HEK293T (cell line): ENCODE measurements at regions of chr5 and their contacts with region 1.

Region 1: GRCh38 chr5:112860929-112861637 is at the start of gene SRP19:
- DNase-seq: peak; percentile 96

Region 2: DNA sequence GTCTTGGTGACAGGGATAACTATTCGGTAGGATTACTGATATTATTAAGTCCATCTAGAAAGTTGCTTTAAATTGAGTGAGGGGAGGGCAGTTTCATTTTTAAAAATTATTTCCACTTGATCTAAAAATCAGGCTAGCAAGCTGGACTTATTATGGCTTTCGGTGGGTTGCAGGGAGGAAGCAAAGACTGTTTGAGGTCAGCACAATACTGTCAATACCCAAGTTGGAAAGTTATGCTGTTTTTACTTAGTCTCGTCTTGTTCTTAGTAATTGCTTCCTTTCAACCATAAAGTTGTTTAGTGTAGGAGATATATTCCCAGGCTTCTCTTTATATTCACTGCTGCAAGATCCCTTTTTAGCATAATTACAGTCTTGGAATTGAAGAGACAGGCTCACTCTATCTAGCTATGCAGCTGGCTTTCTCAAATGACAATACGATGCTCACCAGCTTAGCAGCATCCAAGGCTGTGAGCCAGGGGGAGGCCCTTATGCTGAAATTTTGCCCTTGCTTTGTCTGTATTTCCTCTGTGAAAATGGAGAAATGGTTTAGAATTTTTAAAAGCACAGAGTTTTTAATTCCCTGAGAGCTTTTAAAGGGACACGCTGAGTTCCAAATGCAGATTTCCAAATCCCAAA is 191.6 kb before region 1 on chr5:
- CTCF ChIA-PET with region 1: no interaction called
- POLR2A ChIA-PET with region 1: no interaction called
- DNase-seq: no peak

Region 3: GRCh38 chr5:112848116-112848811 is 12.8 kb before region 1 on chr5:
- CTCF ChIA-PET with region 1: interaction called, 14 read pairs
- POLR2A ChIA-PET with region 1: interaction called, 11 read pairs
- DNase-seq: peak; percentile 61

Region 4: DNA sequence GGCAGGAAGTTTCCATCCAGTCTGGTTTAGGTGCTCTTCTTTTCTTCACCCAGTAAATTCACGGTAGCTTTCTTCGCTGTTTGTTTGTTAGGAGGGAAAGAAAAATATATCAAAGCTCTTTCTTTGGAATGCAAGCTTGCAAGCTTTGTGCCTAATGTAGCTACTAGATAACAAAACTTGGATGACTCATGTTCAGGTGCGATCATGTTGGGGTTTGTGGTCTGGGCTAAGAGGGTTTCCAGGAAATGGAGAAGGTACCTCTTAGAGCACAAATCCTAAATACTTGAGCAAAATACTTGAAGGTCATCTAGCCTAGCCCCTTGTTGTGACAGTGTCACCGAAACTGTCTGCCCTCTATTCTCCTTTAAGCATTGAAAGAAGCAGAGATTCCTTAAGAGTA is 17.7 kb after region 1 on chr5:
- CTCF ChIA-PET with region 1: no interaction called
- POLR2A ChIA-PET with region 1: interaction called, 11 read pairs
- DNase-seq: no peak

Region 5: DNA sequence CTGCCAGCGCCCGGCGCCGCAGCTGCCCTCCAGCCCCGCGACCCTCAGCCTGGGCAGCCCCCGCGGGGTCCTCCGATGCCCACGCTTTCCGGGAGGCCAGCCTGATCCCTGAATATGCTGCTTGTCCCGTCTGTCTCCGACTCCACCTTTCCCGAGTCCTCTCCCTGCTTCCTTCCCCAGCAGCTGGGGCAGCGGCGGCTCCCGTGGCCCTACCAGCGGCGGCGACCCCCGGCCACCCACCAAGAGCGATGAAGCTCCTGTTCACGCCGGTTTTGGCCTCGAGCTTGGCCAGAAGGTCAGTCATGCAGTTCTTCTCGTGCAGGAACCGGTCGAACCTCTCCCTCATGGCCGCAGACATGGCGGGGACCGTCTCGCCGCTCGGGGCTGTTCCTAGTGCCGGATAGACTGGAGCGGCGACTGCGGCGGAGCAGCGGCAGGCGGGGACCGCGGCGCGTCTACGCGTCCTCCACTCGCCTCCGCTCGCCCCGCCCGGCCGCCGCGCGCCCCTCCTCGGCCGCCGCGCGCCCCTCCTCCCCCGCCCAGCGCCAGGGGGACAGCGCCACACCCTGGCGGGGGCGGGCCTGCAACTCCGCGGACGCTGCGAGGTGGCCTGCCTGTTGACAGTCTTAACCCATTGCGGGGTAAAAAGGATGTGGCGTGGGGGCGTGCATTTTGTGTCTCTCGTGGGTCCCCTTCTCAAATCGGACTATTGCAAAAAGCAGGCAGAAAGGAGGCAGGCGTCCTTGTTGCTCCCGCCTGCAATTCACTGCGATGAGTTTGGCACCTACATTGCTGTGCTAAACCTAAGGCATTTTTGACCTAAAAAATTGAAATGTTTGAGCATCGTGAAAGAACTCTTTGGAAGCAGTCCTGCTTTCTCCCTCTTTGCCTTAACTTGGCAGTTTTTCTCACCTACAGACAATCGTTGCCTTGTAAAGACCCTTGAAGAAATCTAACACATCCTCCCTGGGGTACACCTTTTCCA is 61.0 kb after region 1 on chr5 and contains the start of gene REEP5:
- CTCF ChIA-PET with region 1: no interaction called
- POLR2A ChIA-PET with region 1: interaction called, 24 read pairs
- DNase-seq: peak; percentile 92

Region 6: DNA sequence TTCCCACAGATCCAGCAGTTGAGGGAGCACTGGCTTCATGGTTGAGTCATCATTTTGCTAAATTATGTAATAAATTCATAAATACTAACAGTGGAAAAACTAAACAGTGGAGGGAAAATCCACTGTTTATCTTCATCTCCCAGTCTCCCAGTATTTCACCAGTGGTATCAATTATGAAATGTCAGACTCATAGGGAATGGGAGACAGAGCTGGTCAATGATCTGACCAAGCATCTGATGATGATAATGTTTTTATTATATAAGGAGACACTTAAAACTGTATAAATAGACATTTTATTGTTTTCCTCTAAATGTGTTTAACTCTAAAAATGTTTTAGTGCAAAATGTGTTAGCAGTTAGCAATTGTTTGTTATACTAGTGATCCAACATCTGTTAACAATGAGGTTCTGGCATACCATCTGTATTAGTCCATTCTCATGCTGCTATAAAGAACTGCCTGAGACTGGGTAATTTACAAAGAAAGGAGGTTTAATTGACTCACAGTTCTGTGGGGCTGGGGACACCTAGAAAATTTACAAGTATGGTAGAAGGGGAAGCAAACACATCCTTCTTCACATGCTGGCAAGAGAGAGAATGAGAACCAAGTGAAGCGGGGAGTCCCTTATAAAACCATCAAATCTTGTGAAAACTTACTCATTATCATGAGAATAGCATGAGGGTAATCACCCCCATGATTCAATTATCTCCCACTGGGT is 72.7 kb after region 1 on chr5:
- CTCF ChIA-PET with region 1: no interaction called
- POLR2A ChIA-PET with region 1: no interaction called
- DNase-seq: no peak

Region 7: DNA sequence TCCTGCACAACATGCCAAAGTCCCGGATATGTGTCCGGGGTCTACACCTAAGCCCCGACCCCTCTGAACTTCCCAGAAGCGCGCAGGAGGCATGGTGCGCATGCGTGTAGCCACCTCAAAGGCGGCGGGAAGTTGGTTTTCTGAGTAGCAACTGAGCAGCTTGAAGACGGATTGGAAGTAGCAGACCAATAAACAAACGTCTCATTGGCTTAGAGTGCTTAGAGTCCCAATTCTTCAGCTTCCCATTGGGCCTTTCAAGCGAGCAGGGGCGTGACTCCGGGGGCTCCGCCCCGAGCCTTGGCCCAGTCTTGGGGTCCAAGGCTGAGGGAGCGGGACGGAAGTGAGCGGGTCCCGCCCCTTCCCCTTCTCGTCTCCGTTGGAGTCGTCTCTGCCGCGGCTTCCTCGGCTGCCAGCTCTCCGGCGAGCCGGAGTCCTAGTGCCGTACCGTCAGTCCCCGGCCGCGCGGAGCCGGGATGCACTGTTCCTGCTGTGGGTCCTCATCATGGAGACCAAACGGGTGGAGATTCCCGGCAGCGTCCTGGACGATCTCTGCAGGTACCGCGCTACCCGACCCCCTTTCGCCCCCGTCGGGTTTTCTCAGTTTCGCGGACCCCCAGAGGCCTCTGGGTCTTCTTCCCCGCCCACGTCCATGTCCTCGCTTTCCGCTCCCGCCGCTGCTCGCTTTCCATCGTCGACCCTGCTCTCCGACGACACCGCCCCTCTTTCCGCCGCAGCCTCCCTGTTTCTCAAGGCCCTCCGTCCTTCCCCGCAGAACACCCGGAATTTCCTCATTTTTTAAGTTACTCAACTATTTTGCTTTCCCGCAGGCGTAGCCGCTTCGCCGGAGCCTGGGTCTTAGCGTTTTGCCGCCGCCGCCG is 115.6 kb after region 1 on chr5 and contains the start of gene DCP2:
- CTCF ChIA-PET with region 1: no interaction called
- POLR2A ChIA-PET with region 1: interaction called, 10 read pairs
- DNase-seq: peak; percentile 92